Natural killer cell (primary cell): ENCODE measurements at regions of chr6 and their contacts with region 1.

Region 1: GRCh38 chr6:96897383-96898240 is at the start of gene NDUFAF4:
- DNase-seq: peak; percentile 92 to 97
- ATAC-seq: peak; percentile 92 to 98 (median 94)
- H3K4me3 ChIP-seq: peak within 1 kb of the TSS; percentile 85
- H3K4me3 Mint-ChIP-seq: peak within 1 kb of the TSS; percentile 92
- H3K27ac ChIP-seq: peak within 1 kb of the TSS; percentile 90
- H3K27ac Mint-ChIP-seq: peak within 1 kb of the TSS; percentile 85 to 91
- H3K4me1 ChIP-seq: peaks cover 5% of the 10 kb centered on the region
- H3K4me1 Mint-ChIP-seq: peaks cover 18 to 19% of the 10 kb centered on the region in 2 donors
- H3K27me3 ChIP-seq: no peaks in the 10 kb centered on the region
- H3K27me3 Mint-ChIP-seq: peaks cover 10 to 13% of the 10 kb centered on the region in 2 donors
- CTCF ChIP-seq: peak; percentile 86
- total RNA-seq, gene NDUFAF4: 23.8 to 30.9 (median 29.8) TPM

Region 2: DNA sequence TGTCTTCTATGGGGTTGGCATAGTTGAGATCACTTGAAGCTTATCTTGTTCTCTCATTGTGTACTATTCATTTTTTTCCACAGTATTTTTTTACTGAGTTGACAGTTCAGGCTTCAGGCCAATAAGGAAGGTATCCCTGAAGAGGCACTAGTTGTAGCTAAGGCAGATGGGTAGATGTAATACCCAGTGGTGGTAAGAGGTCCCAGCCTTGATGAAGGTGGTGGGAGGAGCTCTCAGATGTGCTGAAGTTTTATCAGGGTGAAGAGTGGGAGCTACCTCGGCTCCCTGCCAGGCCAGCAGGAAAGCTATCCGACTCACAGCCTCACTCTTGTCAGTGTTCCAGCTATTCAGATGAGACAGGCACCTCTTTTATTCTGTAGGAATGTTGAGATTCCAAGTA is 463.7 kb before region 1 on chr6:
- intact Hi-C with region 1: no loop called
- DNase-seq: no peak
- ATAC-seq: no peak
- H3K4me3 ChIP-seq: no peak overlapping the region
- H3K4me3 Mint-ChIP-seq: no peak overlapping the region
- H3K27ac ChIP-seq: no peak overlapping the region
- H3K27ac Mint-ChIP-seq: no peak overlapping the region
- H3K4me1 ChIP-seq: no peaks in the 10 kb centered on the region
- H3K4me1 Mint-ChIP-seq: no peaks in the 10 kb centered on the region
- H3K27me3 ChIP-seq: no peaks in the 10 kb centered on the region
- H3K27me3 Mint-ChIP-seq: no peaks in the 10 kb centered on the region
- CTCF ChIP-seq: no peak

Region 3: DNA sequence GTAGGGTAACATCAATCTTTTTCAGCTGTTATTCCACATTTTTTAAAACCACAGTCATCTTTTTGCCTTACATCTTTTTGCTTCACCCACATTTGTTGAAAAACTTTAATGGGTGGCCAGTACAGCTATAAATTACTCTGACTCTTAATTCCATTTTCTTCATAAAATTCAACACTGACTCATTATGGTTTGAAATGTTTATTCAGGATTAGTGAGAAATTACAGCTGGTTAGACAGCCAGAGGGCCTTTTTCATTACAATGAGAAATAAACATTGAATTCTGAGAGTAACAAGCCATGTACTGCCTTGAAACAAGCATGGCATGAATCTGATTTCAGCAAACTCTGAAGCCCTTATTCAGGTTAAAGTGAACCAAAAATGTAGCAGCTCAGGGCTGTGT is 19.5 kb before region 1 on chr6:
- intact Hi-C with region 1: no loop called
- DNase-seq: no peak
- ATAC-seq: no peak
- H3K4me3 ChIP-seq: no peak overlapping the region
- H3K4me3 Mint-ChIP-seq: no peak overlapping the region
- H3K27ac ChIP-seq: no peak overlapping the region
- H3K27ac Mint-ChIP-seq: no peak overlapping the region
- H3K4me1 ChIP-seq: no peaks in the 10 kb centered on the region
- H3K4me1 Mint-ChIP-seq: no peaks in the 10 kb centered on the region
- H3K27me3 ChIP-seq: peaks cover 3% of the 10 kb centered on the region
- H3K27me3 Mint-ChIP-seq: peaks cover 12 to 19% of the 10 kb centered on the region in 2 donors
- CTCF ChIP-seq: no peak

Region 4: GRCh38 chr6:96923871-96924493 is 26.4 kb after region 1 on chr6:
- intact Hi-C with region 1: loop called (anchors 1 kb)
- DNase-seq: peak in 1 of 2 donors; percentile 74
- ATAC-seq: peak; percentile 33 to 55 (median 52)
- H3K4me3 ChIP-seq: peak overlapping the region; percentile 65
- H3K4me3 Mint-ChIP-seq: peak overlapping the region; percentile 94
- H3K27ac ChIP-seq: peak overlapping the region; percentile 98
- H3K27ac Mint-ChIP-seq: peak overlapping the region; percentile 94 to 96
- H3K4me1 ChIP-seq: peaks cover 14% of the 10 kb centered on the region
- H3K4me1 Mint-ChIP-seq: peaks cover 23 to 32% of the 10 kb centered on the region in 2 donors
- H3K27me3 ChIP-seq: no peaks in the 10 kb centered on the region
- H3K27me3 Mint-ChIP-seq: peaks cover 10 to 29% of the 10 kb centered on the region in 2 donors
- CTCF ChIP-seq: no peak

Region 5: DNA sequence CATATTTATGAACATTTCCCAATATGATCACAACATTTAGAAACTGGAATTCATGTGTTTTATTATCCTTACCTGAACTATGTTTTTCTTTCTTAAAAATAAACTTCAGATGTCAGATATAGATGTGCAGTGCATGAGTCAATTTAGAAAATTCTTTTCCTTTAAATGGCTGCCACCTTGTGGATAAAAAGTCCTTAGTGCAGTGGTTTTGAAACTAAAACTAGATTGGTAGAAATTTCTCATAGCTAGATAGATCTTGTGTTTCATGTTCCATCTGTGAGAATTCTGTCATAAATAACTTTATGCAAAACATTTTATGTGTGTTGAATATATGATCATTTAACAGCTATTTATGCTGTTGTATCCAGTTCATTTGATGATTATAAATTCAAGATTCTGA is 161.9 kb after region 1 on chr6:
- intact Hi-C with region 1: loop called (anchors 5 kb)
- DNase-seq: peak in 1 of 2 donors; percentile 58
- ATAC-seq: peak in 2 of 3 donors; percentile 48 to 57
- H3K4me3 ChIP-seq: no peak overlapping the region
- H3K4me3 Mint-ChIP-seq: no peak overlapping the region
- H3K27ac ChIP-seq: no peak overlapping the region
- H3K27ac Mint-ChIP-seq: no peak overlapping the region
- H3K4me1 ChIP-seq: no peaks in the 10 kb centered on the region
- H3K4me1 Mint-ChIP-seq: no peaks in the 10 kb centered on the region
- H3K27me3 ChIP-seq: no peaks in the 10 kb centered on the region
- H3K27me3 Mint-ChIP-seq: peaks cover 0 to 10% of the 10 kb centered on the region in 2 donors
- CTCF ChIP-seq: peak; percentile 52